Caco-2 (cell line): ENCODE measurements at regions of chr19 and their contacts with region 1.

Region 1: DNA sequence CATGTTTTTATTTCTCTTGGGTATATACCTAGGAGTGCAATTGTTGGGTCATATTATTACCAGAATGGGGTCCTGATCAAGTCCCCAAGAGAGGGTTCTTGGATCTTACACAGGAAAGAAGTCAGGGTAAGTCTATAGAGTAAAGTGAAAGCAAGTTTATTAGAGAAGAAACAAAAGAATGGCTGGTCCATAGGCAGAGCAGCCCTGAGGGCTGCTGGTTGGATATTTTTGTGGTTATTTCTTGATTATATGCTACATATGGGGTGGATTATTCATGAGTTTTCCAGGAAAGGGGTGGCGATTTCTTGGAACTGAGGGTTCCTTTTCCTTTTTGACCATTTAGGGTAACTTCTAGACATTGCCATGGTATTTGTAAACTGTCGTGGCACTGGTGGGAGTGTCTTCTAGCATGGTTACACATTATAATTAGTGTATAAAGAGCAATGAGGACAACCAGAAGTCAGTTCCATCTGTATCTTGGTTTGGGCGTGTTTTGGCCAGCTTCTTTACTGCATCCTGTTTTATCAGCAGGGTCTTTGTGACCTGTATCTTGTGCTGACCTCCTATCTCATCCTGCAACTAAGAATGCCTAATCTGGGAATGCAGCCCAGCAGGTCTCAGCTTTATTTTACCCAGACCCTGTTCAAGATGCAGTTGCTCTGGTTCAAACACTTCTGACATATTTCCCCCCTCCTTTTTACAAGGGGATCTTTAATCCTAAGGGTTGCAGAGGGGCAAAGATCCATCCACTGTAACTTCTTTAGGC is 41.1 kb downstream of the CEACAM1 start:
- DNase-seq: peak; percentile 47 to 65
- H3K4me3 ChIP-seq: no peak overlapping the region
- H3K4me3 Mint-ChIP-seq: peak overlapping the region; percentile 17
- H3K27ac Mint-ChIP-seq: peak overlapping the region; percentile 85
- H3K4me1 ChIP-seq: peaks cover 58% of the 10 kb centered on the region
- H3K4me1 Mint-ChIP-seq: peaks cover 25% of the 10 kb centered on the region
- H3K27me3 ChIP-seq: no peaks in the 10 kb centered on the region
- H3K27me3 Mint-ChIP-seq: no peaks in the 10 kb centered on the region
- CTCF ChIP-seq: no peak

Region 2: DNA sequence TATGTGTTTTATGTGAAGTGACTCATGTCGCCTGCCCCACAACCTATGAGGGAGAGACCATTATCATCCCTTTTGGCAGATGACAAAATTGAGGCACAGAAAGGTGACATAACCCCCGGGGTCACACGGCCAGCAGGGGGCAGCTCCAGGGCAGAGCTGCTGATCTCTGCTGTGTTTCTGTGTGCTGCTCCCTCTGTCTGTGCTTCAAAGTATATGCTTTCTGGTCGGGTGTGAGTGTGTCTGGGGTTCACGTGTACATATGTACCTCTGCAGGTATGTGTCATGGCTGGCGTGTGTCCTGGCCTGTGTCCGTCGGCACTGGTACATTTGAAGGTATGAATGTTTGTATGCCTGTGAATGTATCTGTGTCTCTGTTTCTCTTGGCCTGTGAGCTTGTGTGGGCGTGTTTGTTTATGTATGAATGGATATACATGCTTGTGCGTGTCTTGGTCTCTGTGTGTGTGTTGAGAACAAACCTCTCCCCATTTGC is 67.1 kb before region 1 on chr19:
- CTCF ChIA-PET with region 1: no interaction called
- POLR2A ChIA-PET with region 1: no interaction called
- intact Hi-C with region 1: no loop called
- DNase-seq: peak; percentile 71 to 81
- H3K4me3 ChIP-seq: no peak overlapping the region
- H3K4me3 Mint-ChIP-seq: no peak overlapping the region
- H3K27ac Mint-ChIP-seq: no peak overlapping the region
- H3K4me1 ChIP-seq: peaks cover 14% of the 10 kb centered on the region
- H3K4me1 Mint-ChIP-seq: peaks cover 15% of the 10 kb centered on the region
- H3K27me3 ChIP-seq: no peaks in the 10 kb centered on the region
- H3K27me3 Mint-ChIP-seq: no peaks in the 10 kb centered on the region
- CTCF ChIP-seq: peak; percentile 90

Region 3: GRCh38 chr19:42455621-42456081 is 31.6 kb before region 1 on chr19:
- CTCF ChIA-PET with region 1: interaction called, 5 read pairs
- POLR2A ChIA-PET with region 1: no interaction called
- intact Hi-C with region 1: loop called (anchors 1 kb)
- DNase-seq: peak; percentile 68 to 89
- H3K4me3 ChIP-seq: no peak overlapping the region
- H3K4me3 Mint-ChIP-seq: no peak overlapping the region
- H3K27ac Mint-ChIP-seq: peak overlapping the region; percentile 21
- H3K4me1 ChIP-seq: peaks cover 26% of the 10 kb centered on the region
- H3K4me1 Mint-ChIP-seq: peaks cover 26% of the 10 kb centered on the region
- H3K27me3 ChIP-seq: no peaks in the 10 kb centered on the region
- H3K27me3 Mint-ChIP-seq: no peaks in the 10 kb centered on the region
- CTCF ChIP-seq: no peak

Region 4: DNA sequence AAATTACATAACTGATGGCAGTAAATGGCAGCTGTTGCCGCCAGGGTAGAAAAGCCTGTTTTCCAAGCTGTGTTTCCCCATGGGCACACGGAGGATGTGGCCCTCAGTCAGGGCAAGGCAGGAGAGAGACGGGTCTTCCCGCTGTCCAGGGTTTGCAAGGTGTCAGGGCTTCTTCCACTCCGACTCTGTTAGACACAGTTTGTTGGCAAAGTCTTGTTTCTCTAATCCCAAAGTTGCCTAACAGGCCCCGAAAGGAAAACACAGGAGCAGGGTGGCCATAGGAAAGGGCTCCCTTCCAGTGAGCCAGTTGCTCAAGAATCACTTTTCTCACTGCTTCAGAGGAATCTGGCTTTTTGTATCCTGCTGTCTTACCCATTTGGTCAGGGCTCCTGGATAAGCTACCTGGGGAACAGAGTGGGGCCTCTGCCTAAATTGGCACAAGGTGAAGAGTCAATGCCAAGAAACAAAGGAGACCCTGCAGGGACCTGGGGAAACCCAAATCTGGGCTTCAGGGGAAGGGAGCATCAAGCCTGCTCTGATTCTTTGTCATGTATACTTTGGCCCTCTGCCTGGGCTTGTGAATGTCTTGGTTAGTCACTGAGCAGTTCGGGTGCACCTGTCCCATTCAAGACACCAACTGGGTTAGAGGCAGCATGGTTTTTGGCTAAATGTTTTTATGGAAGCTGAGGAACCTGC is 15.5 kb before region 1 on chr19:
- CTCF ChIA-PET with region 1: interaction called, 3 read pairs
- POLR2A ChIA-PET with region 1: no interaction called
- intact Hi-C with region 1: loop called (anchors 2 kb)
- DNase-seq: peak in 1 of 2 experiments; percentile 34
- H3K4me3 ChIP-seq: no peak overlapping the region
- H3K4me3 Mint-ChIP-seq: no peak overlapping the region
- H3K27ac Mint-ChIP-seq: no peak overlapping the region
- H3K4me1 ChIP-seq: no peaks in the 10 kb centered on the region
- H3K4me1 Mint-ChIP-seq: peaks cover 12% of the 10 kb centered on the region
- H3K27me3 ChIP-seq: no peaks in the 10 kb centered on the region
- H3K27me3 Mint-ChIP-seq: no peaks in the 10 kb centered on the region
- CTCF ChIP-seq: no peak

Region 5: DNA sequence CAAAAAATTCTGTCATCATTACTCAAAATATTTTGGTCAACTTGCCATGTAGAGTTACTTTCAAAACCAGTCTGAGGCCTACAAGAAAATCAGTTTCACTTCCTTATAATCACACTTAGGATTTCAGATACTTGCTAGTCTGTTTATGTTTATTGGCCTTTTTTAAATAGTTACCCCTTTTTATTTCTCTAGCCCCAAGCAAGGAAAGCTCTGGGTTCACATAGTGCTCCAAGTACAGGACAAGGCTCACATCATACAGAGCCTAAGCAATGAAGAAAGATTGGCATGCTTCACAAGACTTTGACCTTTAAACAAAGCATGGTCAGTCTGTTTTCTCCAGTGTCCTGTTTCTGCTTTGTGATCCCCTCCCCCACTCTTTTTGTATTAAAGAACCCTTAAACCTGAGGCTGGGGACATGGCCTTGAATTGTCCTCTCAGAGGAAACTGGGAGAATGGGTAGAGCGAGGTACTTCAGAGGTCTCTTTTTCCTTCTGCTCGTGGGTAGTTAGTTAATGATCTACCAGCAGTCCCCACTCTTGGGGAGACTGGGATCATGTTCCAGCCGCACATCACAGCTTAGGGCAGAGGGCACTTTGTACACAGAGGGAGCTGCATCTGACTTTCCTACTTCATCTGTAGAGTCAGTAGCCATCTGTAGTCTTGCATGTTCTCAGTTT is 10.4 kb after region 1 on chr19:
- CTCF ChIA-PET with region 1: interaction called, 5 read pairs
- POLR2A ChIA-PET with region 1: no interaction called
- intact Hi-C with region 1: loop called (anchors 1 kb)
- DNase-seq: peak; percentile 81 to 88
- H3K4me3 ChIP-seq: no peak overlapping the region
- H3K4me3 Mint-ChIP-seq: peak overlapping the region; percentile 69
- H3K27ac Mint-ChIP-seq: peak overlapping the region; percentile 32
- H3K4me1 ChIP-seq: peaks cover 33% of the 10 kb centered on the region
- H3K4me1 Mint-ChIP-seq: peaks cover 49% of the 10 kb centered on the region
- H3K27me3 ChIP-seq: no peaks in the 10 kb centered on the region
- H3K27me3 Mint-ChIP-seq: no peaks in the 10 kb centered on the region
- CTCF ChIP-seq: no peak

Region 6: DNA sequence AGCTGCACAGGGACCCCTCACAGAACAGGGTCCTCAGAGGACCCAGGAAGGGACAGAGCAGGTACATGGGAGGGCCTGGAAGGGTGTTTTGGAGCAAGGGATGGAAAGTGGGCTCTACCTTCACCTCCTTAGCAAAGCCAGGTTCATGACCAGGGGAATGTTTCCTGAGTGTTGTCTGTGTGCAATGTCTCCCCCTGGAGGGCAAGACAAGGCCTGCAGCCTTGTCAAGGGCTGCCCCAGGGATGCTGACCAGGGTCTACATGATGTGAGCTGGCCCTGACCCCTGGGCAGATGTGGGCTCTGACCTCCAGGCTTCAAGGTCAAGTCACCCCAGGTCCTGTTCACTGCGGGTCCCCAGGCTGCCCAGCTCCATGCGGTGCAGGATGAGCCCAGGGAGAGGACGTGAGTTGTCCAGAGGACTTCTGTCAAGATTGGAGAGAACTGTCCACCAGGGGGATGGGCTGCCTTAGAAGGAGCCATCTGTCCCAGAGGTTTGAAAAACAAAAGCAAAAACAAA is 42.1 kb after region 1 on chr19:
- CTCF ChIA-PET with region 1: interaction called, 4 read pairs
- POLR2A ChIA-PET with region 1: no interaction called
- intact Hi-C with region 1: loop called (anchors 1 kb)
- DNase-seq: peak; percentile 74 to 85
- H3K4me3 ChIP-seq: no peak overlapping the region
- H3K4me3 Mint-ChIP-seq: no peak overlapping the region
- H3K27ac Mint-ChIP-seq: peak overlapping the region; percentile 27
- H3K4me1 ChIP-seq: peaks cover 17% of the 10 kb centered on the region
- H3K4me1 Mint-ChIP-seq: peaks cover 32% of the 10 kb centered on the region
- H3K27me3 ChIP-seq: no peaks in the 10 kb centered on the region
- H3K27me3 Mint-ChIP-seq: no peaks in the 10 kb centered on the region
- CTCF ChIP-seq: peak; percentile 95 to 98

Region 7: GRCh38 chr19:42584466-42584865 is 97.3 kb after region 1 on chr19:
- CTCF ChIA-PET with region 1: no interaction called
- POLR2A ChIA-PET with region 1: no interaction called
- intact Hi-C with region 1: no loop called
- DNase-seq: no peak
- H3K4me3 ChIP-seq: no peak overlapping the region
- H3K4me3 Mint-ChIP-seq: no peak overlapping the region
- H3K27ac Mint-ChIP-seq: no peak overlapping the region
- H3K4me1 ChIP-seq: no peaks in the 10 kb centered on the region
- H3K4me1 Mint-ChIP-seq: no peaks in the 10 kb centered on the region
- H3K27me3 ChIP-seq: no peaks in the 10 kb centered on the region
- H3K27me3 Mint-ChIP-seq: peaks cover 23% of the 10 kb centered on the region
- CTCF ChIP-seq: no peak